H1 (cell line): ENCODE measurements at regions of chr16 and their contacts with region 1.

Region 1: GRCh38 chr16:68367030-68367429 is 56.2 kb downstream of the PRMT7 start:
- DNase-seq: peak in 1 of 2 experiments; percentile 87
- H3K4me3 ChIP-seq: no peak overlapping the region
- H3K27ac ChIP-seq: no peak overlapping the region
- H3K4me1 ChIP-seq: peaks cover 0 to 4% (median 3%) of the 10 kb centered on the region in 4 experiments; a peak in 3 of 7 replicates
- H3K27me3 ChIP-seq: no peaks in the 10 kb centered on the region
- CTCF ChIP-seq: peak; percentile 62 to 84 (median 68)
- EP300 ChIP-seq: no peak
- POLR2A ChIP-seq: no peak
- RAD21 ChIP-seq: peak; percentile 66 to 75

Region 2: GRCh38 chr16:68285683-68286082 is 81.3 kb before region 1 on chr16:
- CTCF ChIA-PET with region 1: no interaction called
- POLR2A ChIA-PET with region 1: no interaction called
- DNase-seq: no peak
- H3K4me3 ChIP-seq: no peak overlapping the region
- H3K27ac ChIP-seq: no peak overlapping the region
- H3K4me1 ChIP-seq: no peaks in the 10 kb centered on the region
- H3K27me3 ChIP-seq: no peaks in the 10 kb centered on the region
- CTCF ChIP-seq: no peak
- EP300 ChIP-seq: no peak
- POLR2A ChIP-seq: no peak
- RAD21 ChIP-seq: no peak

Region 3: GRCh38 chr16:68382296-68382718 is 15.3 kb after region 1 on chr16:
- CTCF ChIA-PET with region 1: interaction called, 221 read pairs
- POLR2A ChIA-PET with region 1: interaction called, 6 read pairs
- DNase-seq: peak in 1 of 2 experiments; percentile 78
- H3K4me3 ChIP-seq: no peak overlapping the region
- H3K27ac ChIP-seq: no peak overlapping the region
- H3K4me1 ChIP-seq: peaks cover 3 to 23% (median 15%) of the 10 kb centered on the region in 4 experiments
- H3K27me3 ChIP-seq: no peaks in the 10 kb centered on the region; a peak in 1 of 7 replicates
- CTCF ChIP-seq: peak; percentile 57 to 88 (median 71)
- EP300 ChIP-seq: no peak
- POLR2A ChIP-seq: no peak
- RAD21 ChIP-seq: peak in 1 of 2 experiments; percentile 49; a peak in 2 of 4 replicates

Region 4: GRCh38 chr16:68406451-68407152 is 39.6 kb after region 1 on chr16:
- CTCF ChIA-PET with region 1: interaction called, 20 read pairs
- POLR2A ChIA-PET with region 1: no interaction called
- DNase-seq: no peak
- H3K4me3 ChIP-seq: no peak overlapping the region
- H3K27ac ChIP-seq: no peak overlapping the region
- H3K4me1 ChIP-seq: peaks cover 0 to 15% (median 6%) of the 10 kb centered on the region in 4 experiments; a peak in 6 of 7 replicates
- H3K27me3 ChIP-seq: no peaks in the 10 kb centered on the region; a peak in 1 of 7 replicates
- CTCF ChIP-seq: no peak
- EP300 ChIP-seq: no peak
- POLR2A ChIP-seq: no peak
- RAD21 ChIP-seq: no peak

Region 5: GRCh38 chr16:68436581-68436980 is 69.6 kb after region 1 on chr16:
- CTCF ChIA-PET with region 1: interaction called, 153 read pairs
- POLR2A ChIA-PET with region 1: interaction called, 3 read pairs
- DNase-seq: peak in 1 of 2 experiments; percentile 65
- H3K4me3 ChIP-seq: no peak overlapping the region
- H3K27ac ChIP-seq: no peak overlapping the region
- H3K4me1 ChIP-seq: peaks cover 0 to 3% (median 0%) of the 10 kb centered on the region in 4 experiments; a peak in 1 of 7 replicates
- H3K27me3 ChIP-seq: no peaks in the 10 kb centered on the region; a peak in 1 of 7 replicates
- CTCF ChIP-seq: peak; percentile 51 to 65 (median 58)
- EP300 ChIP-seq: no peak
- POLR2A ChIP-seq: no peak
- RAD21 ChIP-seq: peak; percentile 34 to 51

Region 6: GRCh38 chr16:68506331-68507053 is 139.5 kb after region 1 on chr16:
- CTCF ChIA-PET with region 1: interaction called, 136 read pairs
- POLR2A ChIA-PET with region 1: no interaction called
- DNase-seq: no peak
- H3K4me3 ChIP-seq: no peak overlapping the region
- H3K27ac ChIP-seq: no peak overlapping the region
- H3K4me1 ChIP-seq: no peaks in the 10 kb centered on the region
- H3K27me3 ChIP-seq: peaks cover 0 to 3% (median 1%) of the 10 kb centered on the region in 4 experiments; a peak in 2 of 7 replicates
- CTCF ChIP-seq: no peak
- EP300 ChIP-seq: no peak
- POLR2A ChIP-seq: no peak
- RAD21 ChIP-seq: no peak

Region 7: DNA sequence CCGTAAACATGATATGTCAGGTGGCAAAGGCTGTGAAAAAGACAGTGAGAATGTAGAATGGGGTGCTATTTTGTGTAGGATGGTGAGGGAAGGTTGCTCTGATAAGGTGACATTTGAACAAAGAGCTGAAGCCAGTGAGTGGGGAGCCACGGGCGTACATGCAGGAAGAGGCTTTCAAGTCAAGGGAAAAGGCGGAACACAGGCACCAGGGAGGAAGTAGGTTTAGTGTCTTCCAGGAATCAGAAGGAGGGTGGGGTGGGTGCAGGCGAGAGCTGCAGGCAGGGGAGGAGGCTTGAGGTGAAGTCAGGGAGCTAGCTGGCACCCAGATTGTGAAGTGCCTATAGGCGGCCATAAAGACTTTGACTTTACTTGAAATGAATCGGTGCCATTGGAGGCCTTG is 186.2 kb after region 1 on chr16:
- CTCF ChIA-PET with region 1: no interaction called
- POLR2A ChIA-PET with region 1: no interaction called
- DNase-seq: no peak
- H3K4me3 ChIP-seq: no peak overlapping the region
- H3K27ac ChIP-seq: no peak overlapping the region
- H3K4me1 ChIP-seq: no peaks in the 10 kb centered on the region
- H3K27me3 ChIP-seq: no peaks in the 10 kb centered on the region; a peak in 1 of 7 replicates
- CTCF ChIP-seq: no peak
- EP300 ChIP-seq: no peak
- POLR2A ChIP-seq: no peak
- RAD21 ChIP-seq: no peak